B cell (primary cell): ENCODE measurements at regions of chr2 and their contacts with region 1.

Region 1: GRCh38 chr2:9843229-9844035 is at the start of gene TAF1B:
- DNase-seq: peak; percentile 90
- ATAC-seq: peak; percentile 86
- H3K4me3 ChIP-seq: peak within 1 kb of the TSS; percentile 73 to 90 (median 84)
- H3K4me3 Mint-ChIP-seq: peak within 1 kb of the TSS; percentile 97
- H3K27ac ChIP-seq: peak within 1 kb of the TSS; percentile 51 to 72
- H3K27ac Mint-ChIP-seq: peak within 1 kb of the TSS; percentile 96
- H3K4me1 ChIP-seq: peaks cover 14 to 20% of the 10 kb centered on the region in 2 donors
- H3K4me1 Mint-ChIP-seq: peaks cover 31% of the 10 kb centered on the region
- H3K27me3 ChIP-seq: no peaks in the 10 kb centered on the region
- H3K27me3 Mint-ChIP-seq: no peaks in the 10 kb centered on the region
- CTCF ChIP-seq: peak; percentile 21
- total RNA-seq, gene TAF1B: 21.8 and 25.5 TPM in 2 replicates

Region 2: DNA sequence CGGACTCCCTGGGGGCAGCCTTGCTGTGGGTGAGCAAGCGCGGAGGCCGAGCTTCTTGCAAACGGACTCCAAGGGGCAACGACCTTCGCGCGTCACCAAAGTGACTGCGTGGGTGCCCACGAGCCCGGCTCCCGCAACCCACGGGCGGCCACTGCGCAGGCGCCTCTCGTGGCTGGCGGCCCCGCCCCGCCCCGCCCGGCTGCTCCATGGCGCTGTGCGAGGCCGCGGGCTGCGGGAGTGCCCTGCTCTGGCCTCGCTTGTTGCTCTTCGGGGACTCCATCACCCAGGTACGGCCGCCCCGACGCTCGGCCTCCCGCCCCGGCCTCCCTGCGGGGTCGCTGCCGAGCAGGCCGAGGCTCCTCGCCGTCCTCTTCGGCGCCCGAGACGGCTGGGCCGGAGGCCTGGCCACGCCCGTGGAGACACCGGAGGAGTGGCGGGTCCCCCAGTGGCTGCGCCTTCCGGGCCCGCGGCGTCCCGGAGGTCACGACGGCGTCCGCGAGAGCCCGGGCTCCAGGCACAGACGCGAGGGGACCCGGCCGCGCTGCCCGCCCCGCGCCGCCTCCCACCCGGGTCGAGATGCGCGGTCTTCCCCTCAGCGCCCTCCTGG is 369.0 kb before region 1 on chr2 and contains the start of gene IAH1:
- CTCF ChIA-PET with region 1: no interaction called
- POLR2A ChIA-PET with region 1: interaction called, 9 read pairs
- intact Hi-C with region 1: loop called (anchors 5 kb)
- DNase-seq: peak; percentile 89
- ATAC-seq: peak; percentile 82
- H3K4me3 ChIP-seq: peak within 1 kb of the TSS; percentile 61 to 85 (median 68)
- H3K4me3 Mint-ChIP-seq: peak within 1 kb of the TSS; percentile 84
- H3K27ac ChIP-seq: peak within 1 kb of the TSS; percentile 62 to 66
- H3K27ac Mint-ChIP-seq: peak within 1 kb of the TSS; percentile 88
- H3K4me1 ChIP-seq: peaks cover 21 to 29% of the 10 kb centered on the region in 2 donors
- H3K4me1 Mint-ChIP-seq: peaks cover 40% of the 10 kb centered on the region
- H3K27me3 ChIP-seq: no peaks in the 10 kb centered on the region
- H3K27me3 Mint-ChIP-seq: no peaks in the 10 kb centered on the region
- CTCF ChIP-seq: no peak
- total RNA-seq, gene IAH1: 47.1 and 54.8 TPM in 2 replicates

Region 3: DNA sequence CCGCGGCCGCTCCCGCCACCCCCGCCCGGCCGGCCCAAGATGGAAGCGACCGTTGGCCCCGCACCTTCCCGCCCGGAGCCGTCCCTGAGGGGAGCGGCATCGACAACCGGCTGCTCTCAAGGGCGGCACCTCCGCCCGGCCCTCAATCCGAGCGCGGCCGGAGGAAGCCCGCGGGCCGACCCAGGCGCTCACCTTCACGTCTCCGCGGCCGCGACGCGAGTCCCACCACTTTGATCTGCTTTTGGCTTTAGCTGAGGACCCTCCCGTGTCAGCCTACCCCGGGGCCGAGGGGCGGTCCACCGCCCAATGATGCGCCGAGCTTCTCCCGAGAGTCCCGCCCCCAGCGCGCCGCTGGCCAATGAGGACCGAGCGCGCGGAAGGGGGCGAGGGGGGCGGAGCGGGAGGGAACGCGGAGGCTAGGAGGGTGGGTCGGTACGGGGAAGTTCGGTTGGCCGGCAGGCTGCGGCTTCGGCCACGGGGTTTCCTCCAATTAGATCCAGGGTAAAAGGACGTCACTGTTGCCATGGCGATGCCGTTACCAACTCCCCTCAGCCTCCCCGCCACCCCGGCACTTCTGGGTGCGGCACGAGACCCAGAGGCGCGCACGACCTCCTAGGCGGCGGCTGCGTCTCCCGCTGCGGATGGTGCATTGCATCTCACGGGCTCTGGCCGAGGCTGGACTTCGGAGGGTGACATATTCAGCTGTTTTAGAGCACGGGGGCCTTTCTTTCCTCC is 212.5 kb before region 1 on chr2 and contains the start of gene YWHAQ:
- CTCF ChIA-PET with region 1: interaction called, 3 read pairs
- POLR2A ChIA-PET with region 1: interaction called, 6 read pairs
- intact Hi-C with region 1: loop called (anchors 1 kb)
- DNase-seq: peak; percentile 100
- ATAC-seq: peak; percentile 91
- H3K4me3 ChIP-seq: peak within 1 kb of the TSS; percentile 54 to 89 (median 69)
- H3K4me3 Mint-ChIP-seq: peak within 1 kb of the TSS; percentile 94
- H3K27ac ChIP-seq: peak within 1 kb of the TSS; percentile 76 to 92
- H3K27ac Mint-ChIP-seq: peak within 1 kb of the TSS; percentile 94
- H3K4me1 ChIP-seq: peaks cover 23 to 36% of the 10 kb centered on the region in 2 donors
- H3K4me1 Mint-ChIP-seq: peaks cover 46% of the 10 kb centered on the region
- H3K27me3 ChIP-seq: no peaks in the 10 kb centered on the region
- H3K27me3 Mint-ChIP-seq: no peaks in the 10 kb centered on the region
- CTCF ChIP-seq: no peak
- total RNA-seq, gene YWHAQ: 119 and 126 TPM in 2 replicates

Region 4: GRCh38 chr2:9951272-9951972 is 108.0 kb after region 1 on chr2 and contains the start of gene GRHL1:
- CTCF ChIA-PET with region 1: no interaction called
- POLR2A ChIA-PET with region 1: no interaction called
- intact Hi-C with region 1: loop called (anchors 1 kb)
- DNase-seq: peak; percentile 94
- ATAC-seq: peak; percentile 96
- H3K4me3 ChIP-seq: peak within 1 kb of the TSS in 4 of 5 experiments; percentile 51 to 69 (median 62)
- H3K4me3 Mint-ChIP-seq: peak within 1 kb of the TSS; percentile 89
- H3K27ac ChIP-seq: peak within 1 kb of the TSS in 1 of 2 donors; percentile 45
- H3K27ac Mint-ChIP-seq: peak within 1 kb of the TSS; percentile 68
- H3K4me1 ChIP-seq: peaks cover 14 to 19% of the 10 kb centered on the region in 2 donors
- H3K4me1 Mint-ChIP-seq: peaks cover 14% of the 10 kb centered on the region
- H3K27me3 ChIP-seq: peaks cover 0 to 41% (median 20%) of the 10 kb centered on the region in 4 experiments
- H3K27me3 Mint-ChIP-seq: peaks cover 44% of the 10 kb centered on the region
- CTCF ChIP-seq: no peak
- total RNA-seq, gene GRHL1: 0.70 and 0.76 TPM in 2 replicates

Region 5: DNA sequence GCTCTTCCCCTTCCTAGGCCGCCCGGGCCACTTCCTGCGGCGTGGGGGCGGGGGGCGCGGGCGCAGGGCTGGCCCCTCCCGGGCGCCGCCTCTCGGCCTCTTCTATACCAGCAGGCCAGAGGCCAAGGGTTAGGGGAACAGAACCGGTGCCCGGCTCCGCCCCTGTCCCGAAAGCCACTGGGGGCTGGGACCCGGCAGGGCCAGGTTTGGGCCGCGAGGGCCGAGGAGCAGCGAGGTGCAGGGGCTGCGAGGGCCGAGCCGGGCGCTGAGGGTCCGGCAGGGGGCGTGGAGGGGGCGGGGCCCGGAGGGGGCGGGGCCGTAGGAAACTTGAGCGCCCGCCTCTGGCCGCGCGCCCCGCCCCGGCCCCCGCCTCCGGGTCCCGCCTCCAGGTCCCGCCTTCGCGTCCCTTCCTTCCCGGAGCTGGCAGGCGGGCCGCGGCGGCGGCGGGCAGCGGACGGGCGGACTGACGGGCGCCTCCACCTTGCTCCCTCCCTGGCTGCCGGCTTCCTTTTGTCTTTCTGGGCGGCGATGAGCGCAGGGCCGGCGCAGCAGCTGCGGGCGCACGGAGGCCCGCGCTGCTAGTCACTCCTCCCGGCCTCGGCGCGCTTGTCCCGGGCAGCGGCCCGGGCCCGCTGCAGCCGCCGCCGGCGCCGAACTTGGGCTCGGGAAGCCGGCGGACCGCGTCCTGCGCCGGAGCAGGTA is 459.2 kb after region 1 on chr2 and contains the start of gene HPCAL1:
- CTCF ChIA-PET with region 1: no interaction called
- POLR2A ChIA-PET with region 1: no interaction called
- intact Hi-C with region 1: loop called (anchors 5 kb)
- DNase-seq: peak; percentile 90
- ATAC-seq: peak; percentile 81
- H3K4me3 ChIP-seq: peak within 1 kb of the TSS; percentile 67 to 78 (median 76)
- H3K4me3 Mint-ChIP-seq: peak within 1 kb of the TSS; percentile 99
- H3K27ac ChIP-seq: peak within 1 kb of the TSS; percentile 71 to 77
- H3K27ac Mint-ChIP-seq: peak within 1 kb of the TSS; percentile 88
- H3K4me1 ChIP-seq: peaks cover 39 to 51% of the 10 kb centered on the region in 2 donors
- H3K4me1 Mint-ChIP-seq: peaks cover 60% of the 10 kb centered on the region
- H3K27me3 ChIP-seq: no peaks in the 10 kb centered on the region
- H3K27me3 Mint-ChIP-seq: no peaks in the 10 kb centered on the region
- CTCF ChIP-seq: peak; percentile 80
- total RNA-seq, gene HPCAL1: 60.3 and 64.1 TPM in 2 replicates